Activated B cell treated with CpG ODN at 0.5 μM for 24 hours (primary cell): ENCODE measurements at regions of chr17 and their contacts with region 1.

Region 1: GRCh38 chr17:51537996-51538550 is 277.7 kb downstream of the UTP18 start:
- DNase-seq: no peak
- ATAC-seq: no peak
- H3K4me3 Mint-ChIP-seq: no peak overlapping the region
- H3K27ac Mint-ChIP-seq: no peak overlapping the region
- H3K4me1 Mint-ChIP-seq: no peaks in the 10 kb centered on the region
- H3K27me3 Mint-ChIP-seq: peaks cover 2% of the 10 kb centered on the region
- CTCF ChIP-seq: no peak

Region 2: DNA sequence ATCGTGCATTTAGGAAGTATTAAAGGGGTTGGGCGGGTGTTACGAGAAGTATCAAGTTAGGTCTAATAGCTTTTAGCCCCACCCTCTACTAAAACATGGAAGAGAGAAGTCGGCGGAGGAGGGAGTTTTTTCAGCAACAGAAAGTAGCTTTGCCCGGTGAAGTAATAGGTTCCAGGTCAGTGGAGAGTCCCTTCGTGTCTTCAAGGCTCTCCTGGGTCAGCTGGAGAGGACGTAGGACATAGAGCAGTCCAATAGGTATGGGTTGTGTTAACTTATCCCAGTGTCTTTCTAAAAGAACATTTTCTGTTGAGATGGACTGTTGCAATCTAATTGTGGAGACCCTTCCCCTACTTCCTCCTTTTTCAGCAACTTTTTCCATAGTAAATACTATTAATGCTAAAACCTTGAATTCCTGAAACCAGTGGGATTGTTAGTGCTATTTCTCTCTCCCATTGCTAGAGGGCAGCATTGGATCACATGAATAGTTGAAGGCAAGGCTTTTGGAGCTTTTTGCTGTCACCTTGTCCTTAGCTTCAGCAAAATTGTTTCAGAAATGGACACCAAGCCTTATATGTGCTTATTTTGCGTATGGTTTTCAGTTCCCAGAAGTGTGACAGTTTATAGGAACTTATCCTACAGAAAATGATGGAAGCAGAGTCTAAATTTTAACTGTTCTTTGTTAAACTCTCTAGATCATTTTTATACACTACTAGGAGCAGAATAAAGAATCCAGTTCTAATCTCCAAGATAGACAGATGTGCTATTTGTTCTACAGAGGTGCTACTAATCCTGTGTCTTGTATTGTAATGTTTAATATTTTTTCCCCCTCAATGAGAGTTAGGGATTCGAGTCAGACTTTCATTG is 239.3 kb before region 1 on chr17:
- CTCF ChIA-PET with region 1: interaction called, 3 read pairs
- POLR2A ChIA-PET with region 1: no interaction called
- intact Hi-C with region 1: loop called (anchors 5 kb)
- DNase-seq: no peak
- ATAC-seq: no peak
- H3K4me3 Mint-ChIP-seq: no peak overlapping the region
- H3K27ac Mint-ChIP-seq: no peak overlapping the region
- H3K4me1 Mint-ChIP-seq: no peaks in the 10 kb centered on the region
- H3K27me3 Mint-ChIP-seq: no peaks in the 10 kb centered on the region
- CTCF ChIP-seq: no peak